IMR-90 (cell line): ENCODE measurements at regions of chr10 and their contacts with region 1.

Region 1: DNA sequence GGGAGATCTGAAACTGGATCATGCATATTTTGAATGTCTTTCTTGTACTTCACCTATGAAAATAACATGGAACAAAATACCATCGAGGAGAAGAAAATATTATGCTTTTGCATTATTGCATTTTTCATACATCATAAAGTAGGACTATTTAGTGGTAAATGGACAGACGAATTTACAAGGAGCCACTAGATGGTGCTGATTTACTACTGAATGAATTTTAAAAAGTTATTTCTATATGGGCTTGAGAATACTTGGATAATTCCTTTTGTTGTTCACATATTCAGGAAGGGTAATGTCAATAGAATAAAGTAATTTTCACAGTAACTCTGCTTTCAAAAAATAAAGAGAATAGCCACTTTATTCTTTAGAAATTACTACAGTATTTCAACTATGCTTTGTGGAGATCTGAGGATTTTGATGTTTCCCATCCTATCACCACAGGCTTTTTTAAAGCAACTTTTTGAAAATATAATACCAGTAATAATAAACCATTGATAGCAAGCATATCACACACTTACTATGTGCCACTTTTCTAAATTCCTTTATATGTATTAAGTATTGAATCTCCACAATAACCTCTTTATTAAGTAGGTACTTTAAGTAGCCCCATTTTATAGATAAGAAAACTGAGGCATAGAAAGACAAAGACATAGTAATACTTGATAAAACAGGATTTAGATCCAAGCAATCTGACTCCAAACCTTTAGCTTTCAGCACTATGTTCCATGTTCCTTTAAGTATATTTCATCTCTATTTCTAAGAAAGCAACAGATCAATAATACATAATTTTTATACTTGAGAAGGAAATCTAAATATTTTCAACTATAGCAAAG is 38.6 kb downstream of the NEBL start:
- DNase-seq: peak; percentile 22
- ATAC-seq: peak; percentile 64
- H3K4me3 ChIP-seq: no peak overlapping the region
- H3K27ac ChIP-seq: no peak overlapping the region
- H3K4me1 ChIP-seq: no peaks in the 10 kb centered on the region
- H3K27me3 ChIP-seq: no peaks in the 10 kb centered on the region
- CTCF ChIP-seq: peak; percentile 56
- POLR2A ChIP-seq: no peak
- RAD21 ChIP-seq: peak; percentile 61

Region 2: DNA sequence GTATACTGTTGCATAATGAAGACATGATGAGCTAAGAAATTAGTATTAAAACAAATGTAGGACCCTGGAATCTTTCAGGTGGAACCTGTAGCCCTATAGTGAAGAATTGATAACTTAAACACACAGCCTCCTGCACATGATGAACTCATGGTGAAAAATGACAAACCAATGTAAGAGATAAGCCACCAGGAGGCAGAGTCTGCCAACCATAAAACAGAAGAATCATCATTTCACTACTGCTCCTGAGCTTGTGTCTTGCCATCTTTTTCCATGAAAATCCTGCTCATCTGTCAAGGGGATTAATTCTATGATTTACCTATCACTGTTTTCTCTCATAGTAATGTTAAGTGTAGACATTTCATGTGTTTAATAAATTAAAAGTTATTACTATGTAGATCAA is 1446.0 kb before region 1 on chr10:
- CTCF ChIA-PET with region 1: no interaction called
- POLR2A ChIA-PET with region 1: no interaction called
- dilution Hi-C with region 1: no loop called
- in situ Hi-C with region 1: no loop called
- intact Hi-C with region 1: loop called (anchors 2 kb)
- DNase-seq: peak; percentile 45
- ATAC-seq: peak; percentile 69
- H3K4me3 ChIP-seq: no peak overlapping the region
- H3K27ac ChIP-seq: no peak overlapping the region
- H3K4me1 ChIP-seq: no peaks in the 10 kb centered on the region
- H3K27me3 ChIP-seq: no peaks in the 10 kb centered on the region
- CTCF ChIP-seq: peak; percentile 52
- POLR2A ChIP-seq: no peak
- RAD21 ChIP-seq: peak; percentile 66

Region 3: DNA sequence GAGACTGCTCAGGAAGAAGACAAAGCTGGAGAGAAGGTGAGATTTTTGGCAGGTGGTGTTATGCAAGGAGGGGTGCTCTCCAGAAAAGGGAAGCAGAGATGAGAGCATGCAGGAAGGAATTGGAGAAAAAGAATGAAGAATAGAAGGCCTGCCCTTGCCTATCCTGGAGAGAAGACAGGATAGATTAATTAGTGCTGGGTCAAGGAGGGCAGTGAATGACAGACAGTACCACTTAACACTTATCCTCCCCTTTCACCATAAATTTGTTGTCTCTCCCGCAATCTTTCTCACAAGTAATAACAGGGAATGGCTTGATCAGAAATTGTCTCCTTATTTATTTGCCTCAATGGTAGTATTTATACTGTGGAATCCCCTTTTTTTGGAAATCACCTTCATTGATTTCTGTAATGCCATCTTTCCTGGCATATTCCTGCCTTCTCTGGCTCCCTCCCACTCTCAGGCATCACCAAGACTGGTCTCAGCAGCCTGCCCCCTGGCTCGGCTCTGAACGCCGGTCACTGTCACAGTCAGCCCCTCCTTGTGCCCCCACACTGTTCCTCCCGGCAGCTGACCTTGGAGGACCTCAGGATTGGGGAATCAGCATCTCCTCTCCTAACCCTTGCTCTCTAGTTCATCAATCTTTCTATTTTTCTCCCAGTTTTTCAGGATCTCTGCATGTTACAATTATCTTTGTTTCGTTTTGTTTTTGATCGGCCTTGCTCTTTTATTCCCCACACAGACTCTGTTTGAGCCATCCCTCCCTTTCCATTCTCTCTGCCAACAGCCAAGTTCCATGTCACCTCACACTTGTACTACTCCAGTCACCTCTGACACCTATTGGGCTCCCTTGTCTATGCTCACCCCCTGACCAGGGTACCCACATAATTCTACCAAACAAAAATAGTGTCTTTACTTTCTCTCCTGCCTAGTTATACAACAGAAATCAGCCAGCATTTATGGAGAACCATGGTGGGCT is 748.1 kb before region 1 on chr10:
- CTCF ChIA-PET with region 1: no interaction called
- POLR2A ChIA-PET with region 1: no interaction called
- dilution Hi-C with region 1: no loop called
- in situ Hi-C with region 1: no loop called
- intact Hi-C with region 1: loop called (anchors 10 kb)
- DNase-seq: no peak
- ATAC-seq: no peak
- H3K4me3 ChIP-seq: peak overlapping the region; percentile 49
- H3K27ac ChIP-seq: no peak overlapping the region
- H3K4me1 ChIP-seq: peaks cover 9% of the 10 kb centered on the region
- H3K27me3 ChIP-seq: no peaks in the 10 kb centered on the region
- CTCF ChIP-seq: no peak
- POLR2A ChIP-seq: no peak
- RAD21 ChIP-seq: no peak

Region 4: GRCh38 chr10:21083871-21084295 is 225.4 kb after region 1 on chr10:
- CTCF ChIA-PET with region 1: no interaction called
- POLR2A ChIA-PET with region 1: no interaction called
- dilution Hi-C with region 1: no loop called
- in situ Hi-C with region 1: no loop called
- intact Hi-C with region 1: loop called (anchors 10 kb)
- DNase-seq: no peak
- ATAC-seq: no peak
- H3K4me3 ChIP-seq: no peak overlapping the region
- H3K27ac ChIP-seq: no peak overlapping the region
- H3K4me1 ChIP-seq: no peaks in the 10 kb centered on the region
- H3K27me3 ChIP-seq: no peaks in the 10 kb centered on the region
- CTCF ChIP-seq: no peak
- POLR2A ChIP-seq: no peak
- RAD21 ChIP-seq: no peak

Region 5: DNA sequence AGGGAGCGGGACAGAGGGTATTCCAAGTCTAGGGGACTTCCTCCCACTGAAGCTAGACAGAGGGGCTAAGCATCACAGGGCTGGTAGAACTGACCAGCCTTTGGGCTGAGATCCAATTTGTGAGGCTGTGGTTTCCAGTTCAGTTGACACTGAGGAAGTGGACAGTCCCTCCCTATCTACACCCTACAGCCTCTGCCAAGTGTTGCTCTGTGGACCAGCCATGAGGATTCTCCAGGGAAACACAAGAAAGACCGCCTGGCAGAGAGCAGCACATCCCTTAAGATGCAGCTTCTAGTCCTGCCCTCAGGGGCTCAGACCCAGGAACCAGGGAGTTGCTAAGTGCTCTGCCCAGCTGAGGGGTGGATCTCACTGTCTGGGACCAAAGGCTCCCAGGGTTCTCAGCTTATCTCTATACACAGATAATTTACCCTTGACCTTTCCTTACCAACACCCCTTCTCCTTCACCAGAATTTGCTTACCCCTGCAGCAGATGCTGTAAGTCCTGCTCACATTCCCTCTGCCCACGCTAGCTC is 415.0 kb after region 1 on chr10:
- CTCF ChIA-PET with region 1: no interaction called
- POLR2A ChIA-PET with region 1: no interaction called
- dilution Hi-C with region 1: no loop called
- in situ Hi-C with region 1: no loop called
- intact Hi-C with region 1: loop called (anchors 1 kb)
- DNase-seq: no peak
- ATAC-seq: no peak
- H3K4me3 ChIP-seq: no peak overlapping the region
- H3K27ac ChIP-seq: no peak overlapping the region
- H3K4me1 ChIP-seq: no peaks in the 10 kb centered on the region
- H3K27me3 ChIP-seq: peaks cover 2% of the 10 kb centered on the region; the same call in 1 of the 2 replicates
- CTCF ChIP-seq: no peak
- POLR2A ChIP-seq: no peak
- RAD21 ChIP-seq: no peak